ENCODE measurements at regions of chr3 and their contacts with region 1.

Region 1: GRCh38 chr3:16290007-16290826 is 25.2 kb downstream of the OXNAD1 start:
- DNase-seq: peak; percentile 70
- H3K4me3 Mint-ChIP-seq: peak overlapping the region; percentile 45
- H3K27ac Mint-ChIP-seq: peak overlapping the region; percentile 85
- H3K4me1 Mint-ChIP-seq: peaks cover 89% of the 10 kb centered on the region
- H3K27me3 Mint-ChIP-seq: no peaks in the 10 kb centered on the region

Region 2: GRCh38 chr3:16124636-16125035 is 165.6 kb before region 1 on chr3:
- CTCF ChIA-PET with region 1: no interaction called
- POLR2A ChIA-PET with region 1: no interaction called
- intact Hi-C with region 1: no loop called
- DNase-seq: no peak
- H3K4me3 Mint-ChIP-seq: no peak overlapping the region
- H3K27ac Mint-ChIP-seq: no peak overlapping the region
- H3K4me1 Mint-ChIP-seq: no peaks in the 10 kb centered on the region
- H3K27me3 Mint-ChIP-seq: peaks cover 2% of the 10 kb centered on the region

Region 3: GRCh38 chr3:16300881-16301359 is 10.7 kb after region 1 on chr3:
- CTCF ChIA-PET with region 1: interaction called, 20 read pairs
- POLR2A ChIA-PET with region 1: interaction called, 6 read pairs
- intact Hi-C with region 1: loop called (anchors 1 kb)
- DNase-seq: peak; percentile 62
- H3K4me3 Mint-ChIP-seq: peak overlapping the region; percentile 66
- H3K27ac Mint-ChIP-seq: peak overlapping the region; percentile 91
- H3K4me1 Mint-ChIP-seq: peaks cover 96% of the 10 kb centered on the region
- H3K27me3 Mint-ChIP-seq: no peaks in the 10 kb centered on the region

Region 4: GRCh38 chr3:16319307-16319706 is 29.1 kb after region 1 on chr3:
- CTCF ChIA-PET with region 1: interaction called, 228 read pairs
- POLR2A ChIA-PET with region 1: interaction called, 13 read pairs
- intact Hi-C with region 1: loop called (anchors 1 kb)
- DNase-seq: peak; percentile 91
- H3K4me3 Mint-ChIP-seq: no peak overlapping the region
- H3K27ac Mint-ChIP-seq: peak overlapping the region; percentile 80
- H3K4me1 Mint-ChIP-seq: peaks cover 64% of the 10 kb centered on the region
- H3K27me3 Mint-ChIP-seq: no peaks in the 10 kb centered on the region

Region 5: DNA sequence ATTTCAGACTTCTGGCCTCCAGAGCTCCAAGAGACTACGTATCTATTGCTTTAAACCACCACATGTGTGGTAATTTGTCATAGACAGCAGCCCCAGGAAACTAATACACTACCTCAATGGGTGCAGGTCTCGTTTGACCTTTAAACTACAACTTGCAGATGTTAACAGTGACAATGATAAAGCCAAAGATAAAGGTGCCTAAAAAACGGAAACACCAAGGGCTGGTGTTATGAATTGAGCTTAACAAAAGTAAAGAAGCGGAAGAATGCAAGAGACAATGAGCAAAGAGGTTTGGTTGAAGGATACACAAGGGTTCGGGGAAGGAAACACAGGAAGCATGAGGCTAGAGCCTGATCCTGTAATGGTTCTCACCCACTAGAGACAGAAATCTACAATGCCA is 172.5 kb after region 1 on chr3:
- CTCF ChIA-PET with region 1: no interaction called
- POLR2A ChIA-PET with region 1: no interaction called
- intact Hi-C with region 1: loop called (anchors 5 kb)
- DNase-seq: peak; percentile 33
- H3K4me3 Mint-ChIP-seq: no peak overlapping the region
- H3K27ac Mint-ChIP-seq: peak overlapping the region; percentile 64
- H3K4me1 Mint-ChIP-seq: peaks cover 48% of the 10 kb centered on the region
- H3K27me3 Mint-ChIP-seq: no peaks in the 10 kb centered on the region

Region 6: GRCh38 chr3:16520970-16521881 is 231.0 kb after region 1 on chr3:
- CTCF ChIA-PET with region 1: interaction called, 4 read pairs
- POLR2A ChIA-PET with region 1: interaction called, 3 read pairs
- intact Hi-C with region 1: loop called (anchors 1 kb)
- DNase-seq: peak; percentile 46
- H3K4me3 Mint-ChIP-seq: no peak overlapping the region
- H3K27ac Mint-ChIP-seq: peak overlapping the region; percentile 89
- H3K4me1 Mint-ChIP-seq: peaks cover 71% of the 10 kb centered on the region
- H3K27me3 Mint-ChIP-seq: no peaks in the 10 kb centered on the region

Region 7: DNA sequence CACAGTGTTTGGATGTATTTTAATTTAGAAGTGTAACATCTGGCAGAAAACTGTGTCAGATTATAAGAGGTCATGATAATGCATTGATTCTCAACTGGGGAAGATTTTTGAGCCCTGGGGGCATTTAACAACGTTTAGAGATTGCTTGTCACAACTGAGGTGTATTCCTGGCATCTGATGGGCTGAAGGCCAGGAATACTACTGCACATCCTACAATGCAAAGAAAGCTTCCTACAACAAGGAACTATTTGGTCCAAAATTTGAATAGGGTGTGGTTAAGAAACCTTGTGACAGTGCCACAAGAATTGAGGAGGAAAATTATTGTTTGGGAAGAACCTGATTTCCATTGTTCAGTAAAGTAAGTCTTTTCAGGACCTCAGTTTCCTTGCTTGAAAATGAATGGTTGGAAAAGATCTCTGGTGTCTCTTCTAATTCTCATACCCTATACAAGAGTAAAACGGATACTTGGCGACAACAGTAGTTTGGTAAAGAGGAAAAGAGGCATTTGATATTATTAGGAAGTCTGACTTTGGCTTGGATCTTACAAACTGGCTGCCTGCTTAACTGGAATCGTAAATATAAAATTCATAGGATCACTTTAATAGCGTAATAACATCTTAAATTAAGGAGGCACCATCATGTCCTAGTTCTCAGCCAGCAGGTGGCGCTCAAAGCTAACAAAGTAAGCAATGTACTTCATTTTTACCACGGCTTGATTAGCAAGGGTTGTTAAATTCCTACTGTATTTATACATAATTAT is 310.7 kb after region 1 on chr3:
- CTCF ChIA-PET with region 1: interaction called, 7 read pairs
- POLR2A ChIA-PET with region 1: no interaction called
- intact Hi-C with region 1: loop called (anchors 2 kb)
- DNase-seq: peak; percentile 81
- H3K4me3 Mint-ChIP-seq: no peak overlapping the region
- H3K27ac Mint-ChIP-seq: no peak overlapping the region
- H3K4me1 Mint-ChIP-seq: peaks cover 24% of the 10 kb centered on the region
- H3K27me3 Mint-ChIP-seq: peaks cover 10% of the 10 kb centered on the region

Region 8: GRCh38 chr3:17233398-17233800 is 943.2 kb after region 1 on chr3:
- CTCF ChIA-PET with region 1: no interaction called
- POLR2A ChIA-PET with region 1: no interaction called
- intact Hi-C with region 1: loop called (anchors 10 kb)
- DNase-seq: peak; percentile 25
- H3K4me3 Mint-ChIP-seq: no peak overlapping the region
- H3K27ac Mint-ChIP-seq: no peak overlapping the region
- H3K4me1 Mint-ChIP-seq: peaks cover 21% of the 10 kb centered on the region
- H3K27me3 Mint-ChIP-seq: no peaks in the 10 kb centered on the region

Measured in activated CD4-positive, alpha-beta memory T cell treated with anti-CD3 and anti-CD28 coated beads for 36 hours (primary cell).